HCT116 (cell line): ENCODE measurements at regions of chr10 and their contacts with region 1.

Region 1: DNA sequence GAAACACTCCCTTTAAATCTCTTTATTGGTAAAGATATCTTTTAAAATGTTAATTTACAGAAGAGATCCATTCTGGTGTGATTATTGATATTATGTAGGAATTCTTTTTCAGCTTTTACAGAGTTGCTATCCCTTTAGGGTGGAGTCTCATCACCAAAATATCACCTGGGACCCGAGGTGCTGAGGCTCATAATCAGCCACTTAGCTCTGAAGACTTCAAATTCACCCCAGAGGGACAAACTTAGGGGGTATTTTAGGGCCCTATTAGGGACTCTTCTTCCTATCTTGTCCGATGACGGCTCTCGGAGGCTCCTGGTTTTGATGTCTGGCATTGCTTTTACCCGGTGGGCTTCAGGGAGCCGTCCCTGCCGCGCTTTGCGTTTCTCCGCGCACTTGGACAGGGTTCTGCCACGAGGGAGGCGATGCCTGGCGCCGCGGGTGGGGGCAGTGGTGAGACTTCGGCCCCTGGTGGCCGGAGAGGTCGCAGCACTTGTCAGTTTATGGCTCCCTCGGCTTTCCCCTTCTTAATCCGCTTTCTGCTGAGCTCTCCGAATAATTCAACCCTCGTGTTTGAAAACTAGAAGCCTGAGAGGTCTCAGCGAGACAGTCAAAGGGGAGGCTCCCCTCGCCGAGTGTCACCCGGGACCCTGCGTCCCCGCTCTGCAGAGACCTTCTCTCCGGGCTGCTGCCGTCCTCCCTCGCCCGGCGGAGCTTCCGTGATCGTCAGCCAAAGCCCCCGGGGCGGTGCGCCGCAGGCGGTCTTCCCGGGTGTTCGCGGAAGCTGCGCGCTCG is 27.8 kb downstream of the RBM20 start:
- DNase-seq: peak; percentile 78
- ATAC-seq: peak; percentile 97
- H3K4me3 ChIP-seq: peak overlapping the region; percentile 66 to 68
- H3K27ac ChIP-seq: peak overlapping the region; percentile 32
- H3K4me1 ChIP-seq: peaks cover 3 to 18% of the 10 kb centered on the region in 2 experiments; a peak in 2 of 4 replicates
- H3K27me3 ChIP-seq: no peaks in the 10 kb centered on the region
- CTCF ChIP-seq: peak; percentile 89 to 97 (median 90)
- POLR2A ChIP-seq: peak; percentile 32
- RAD21 ChIP-seq: peak; percentile 85

Region 2: GRCh38 chr10:110576220-110576619 is 95.8 kb before region 1 on chr10:
- CTCF ChIA-PET with region 1: no interaction called
- POLR2A ChIA-PET with region 1: no interaction called
- RAD21 ChIA-PET with region 1: no interaction called
- intact Hi-C with region 1: no loop called
- DNase-seq: no peak
- ATAC-seq: no peak
- H3K4me3 ChIP-seq: no peak overlapping the region
- H3K27ac ChIP-seq: no peak overlapping the region
- H3K4me1 ChIP-seq: no peaks in the 10 kb centered on the region
- H3K27me3 ChIP-seq: no peaks in the 10 kb centered on the region
- CTCF ChIP-seq: no peak
- POLR2A ChIP-seq: no peak
- RAD21 ChIP-seq: no peak

Region 3: GRCh38 chr10:110659558-110659957 is 12.4 kb before region 1 on chr10:
- CTCF ChIA-PET with region 1: interaction called, 12 read pairs
- POLR2A ChIA-PET with region 1: interaction called, 3 read pairs
- RAD21 ChIA-PET with region 1: no interaction called
- intact Hi-C with region 1: no loop called
- DNase-seq: no peak
- ATAC-seq: no peak
- H3K4me3 ChIP-seq: no peak overlapping the region
- H3K27ac ChIP-seq: no peak overlapping the region
- H3K4me1 ChIP-seq: peaks cover 5 to 10% of the 10 kb centered on the region in 2 experiments
- H3K27me3 ChIP-seq: no peaks in the 10 kb centered on the region
- CTCF ChIP-seq: no peak
- POLR2A ChIP-seq: no peak
- RAD21 ChIP-seq: no peak